ENCODE measurements at regions of chr6 and their contacts with region 1.

Region 1: DNA sequence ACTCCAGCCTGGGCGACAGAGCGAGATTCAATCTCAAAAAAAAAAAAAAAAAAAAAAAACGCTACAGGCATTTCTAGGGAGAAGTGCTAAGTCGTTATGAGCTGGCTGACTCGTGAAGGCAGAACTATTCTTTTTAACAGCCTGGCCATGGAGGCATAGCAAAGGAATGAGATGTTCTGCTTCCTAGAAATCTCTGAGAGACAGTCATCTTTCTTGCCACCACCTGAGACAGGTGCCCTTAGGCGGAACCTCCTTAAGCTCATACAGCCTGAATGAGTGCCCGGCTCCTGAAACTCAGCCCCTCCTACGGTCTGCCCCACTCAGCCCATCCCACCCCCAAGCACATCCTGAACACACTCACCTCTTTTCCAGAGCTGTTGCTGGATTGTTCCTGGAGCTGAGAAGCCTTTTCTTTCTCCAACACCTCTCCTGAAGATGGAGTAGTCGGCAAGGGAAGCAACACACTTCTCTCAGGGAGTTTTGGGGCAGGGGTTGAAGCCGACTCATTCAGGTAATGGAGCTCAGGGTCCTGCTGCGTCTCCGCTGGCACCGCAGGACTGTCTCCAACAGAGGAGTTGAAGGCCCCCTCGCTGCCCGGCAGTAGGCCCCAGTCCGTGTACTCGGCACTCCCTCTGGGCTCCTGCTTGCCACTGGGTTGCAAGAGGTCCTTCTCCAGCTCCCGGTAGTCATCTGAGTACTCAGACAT is 50.3 kb downstream of the KIAA0319 start:
- DNase-seq: no peak
- ATAC-seq: no peak
- H3K4me3 Mint-ChIP-seq: no peak overlapping the region
- H3K27ac Mint-ChIP-seq: no peak overlapping the region
- H3K4me1 Mint-ChIP-seq: no peaks in the 10 kb centered on the region
- H3K27me3 Mint-ChIP-seq: no peaks in the 10 kb centered on the region

Region 2: DNA sequence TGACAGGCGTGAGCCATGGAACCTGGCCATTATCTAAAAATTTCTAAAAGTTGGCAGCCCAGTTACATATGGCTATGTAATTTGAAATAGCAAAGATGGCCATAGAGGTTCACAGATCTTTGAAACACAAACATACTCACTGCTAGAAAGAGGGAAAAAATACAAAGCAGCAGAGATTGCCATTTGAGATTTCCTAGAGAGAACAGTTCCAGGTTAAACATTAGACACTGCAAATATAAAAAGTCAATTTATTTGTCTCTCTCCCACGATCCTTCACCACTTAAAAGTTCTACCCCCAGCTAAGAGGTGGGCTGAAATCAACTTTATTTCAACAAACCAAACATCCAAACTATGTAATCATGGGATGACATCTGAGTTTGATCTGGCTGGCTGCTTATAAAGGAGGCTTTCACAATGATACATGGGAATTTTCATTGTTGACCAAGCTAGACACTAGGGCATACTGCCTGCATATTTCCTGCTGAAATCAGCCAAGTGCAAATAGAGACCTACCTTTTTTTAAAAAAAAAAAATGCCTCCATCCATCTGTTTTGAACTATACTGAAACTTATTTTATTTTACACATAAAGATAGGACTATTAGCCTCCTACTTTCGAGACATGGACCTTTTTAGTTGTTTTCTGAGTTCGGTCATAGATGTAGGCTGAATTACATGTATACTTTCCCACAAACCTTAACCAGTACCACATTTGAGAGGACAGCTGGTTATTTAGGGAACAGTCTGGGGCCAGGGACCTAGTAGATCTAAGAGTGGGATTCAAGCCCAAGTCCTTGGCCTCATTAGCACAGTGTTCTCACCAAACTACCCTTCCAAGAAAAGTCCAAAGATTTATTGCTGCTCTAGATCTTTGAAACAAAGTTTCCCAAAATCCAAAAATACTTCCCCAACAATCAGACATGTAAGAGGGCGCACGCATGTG is 254.4 kb before region 1 on chr6:
- CTCF ChIA-PET with region 1: no interaction called
- POLR2A ChIA-PET with region 1: no interaction called
- intact Hi-C with region 1: no loop called
- DNase-seq: no peak
- ATAC-seq: no peak
- H3K4me3 Mint-ChIP-seq: no peak overlapping the region
- H3K27ac Mint-ChIP-seq: no peak overlapping the region
- H3K4me1 Mint-ChIP-seq: no peaks in the 10 kb centered on the region
- H3K27me3 Mint-ChIP-seq: peaks cover 18% of the 10 kb centered on the region

Region 3: DNA sequence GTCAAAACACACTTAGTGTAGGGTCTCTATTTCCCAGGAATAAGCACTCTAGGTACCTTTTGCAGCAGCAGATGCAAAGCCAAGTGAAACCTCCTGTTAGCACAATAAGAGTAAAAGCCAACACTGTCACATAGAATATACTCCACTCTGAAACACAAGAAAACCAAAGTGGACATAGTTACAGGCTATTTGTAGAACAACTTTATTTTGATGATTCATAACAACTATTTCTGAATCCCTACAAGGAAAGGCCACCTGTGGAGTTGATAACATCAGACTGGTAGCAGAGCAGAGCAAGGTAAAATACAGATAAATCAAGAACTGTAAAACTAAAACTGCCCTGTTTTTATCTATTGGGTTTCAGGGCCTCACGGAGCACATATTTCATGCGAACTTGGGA is 41.2 kb before region 1 on chr6:
- CTCF ChIA-PET with region 1: no interaction called
- POLR2A ChIA-PET with region 1: no interaction called
- intact Hi-C with region 1: loop called in 1 of 2 experiments (anchors 1 kb)
- DNase-seq: no peak
- ATAC-seq: no peak
- H3K4me3 Mint-ChIP-seq: no peak overlapping the region
- H3K27ac Mint-ChIP-seq: no peak overlapping the region
- H3K4me1 Mint-ChIP-seq: no peaks in the 10 kb centered on the region
- H3K27me3 Mint-ChIP-seq: no peaks in the 10 kb centered on the region